Motor neuron (in vitro differentiated cells): ENCODE measurements at regions of chr2 and their contacts with region 1.

Region 1: DNA sequence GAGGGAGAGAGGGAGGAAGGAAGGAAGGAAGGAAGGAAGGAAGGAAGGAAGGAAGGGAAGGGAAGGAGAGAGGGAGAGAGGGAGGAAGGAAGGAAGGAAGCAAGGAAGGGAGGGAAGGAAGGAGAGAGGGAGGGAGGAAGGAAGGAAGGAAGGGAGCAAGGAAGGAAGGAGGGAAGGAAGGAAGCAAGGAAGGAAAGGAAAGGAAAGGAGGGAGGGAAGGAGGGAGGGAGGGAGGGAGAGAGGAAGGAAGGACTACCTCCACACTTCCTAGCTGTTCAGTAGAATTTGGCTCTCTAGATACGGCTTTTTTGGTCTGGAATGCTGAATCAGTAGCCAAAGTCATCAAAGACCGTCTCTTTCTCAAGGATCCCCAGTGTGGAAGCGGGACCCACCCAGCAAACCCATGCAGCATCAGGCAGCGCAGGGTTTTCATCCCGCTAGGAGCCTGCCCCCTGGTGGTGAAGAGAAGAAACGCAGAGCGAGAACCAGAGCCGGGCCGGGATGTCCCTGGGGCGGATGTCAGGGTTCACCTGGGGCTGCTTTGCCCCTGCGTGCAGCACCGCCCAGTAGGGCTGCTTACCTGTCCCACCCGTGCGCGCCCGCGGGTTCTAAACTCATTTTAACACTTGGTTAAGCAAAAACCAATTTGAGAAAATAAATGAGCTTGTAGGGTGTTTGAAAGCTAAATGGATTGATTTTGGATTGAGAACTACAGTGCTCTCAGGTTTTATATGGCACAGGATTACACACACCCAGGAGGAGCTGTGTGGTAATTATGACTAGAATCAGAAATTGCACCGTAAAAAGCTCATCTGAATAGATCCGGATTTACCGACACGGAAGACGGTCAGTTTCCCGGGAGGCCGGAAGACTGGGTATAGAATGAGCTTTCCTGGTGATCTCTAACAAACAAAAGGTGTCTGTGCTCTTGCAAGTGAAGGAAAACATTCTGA is 48.1 kb upstream of the ARL4C start:
- ATAC-seq: peak in 6 of 8 experiments; percentile 4 to 90 (median 61)
- H3K4me3 ChIP-seq: no peak overlapping the region
- H3K27ac ChIP-seq: no peak overlapping the region
- H3K4me1 ChIP-seq: peaks cover 17 to 33% of the 10 kb centered on the region in 2 donors

Region 2: DNA sequence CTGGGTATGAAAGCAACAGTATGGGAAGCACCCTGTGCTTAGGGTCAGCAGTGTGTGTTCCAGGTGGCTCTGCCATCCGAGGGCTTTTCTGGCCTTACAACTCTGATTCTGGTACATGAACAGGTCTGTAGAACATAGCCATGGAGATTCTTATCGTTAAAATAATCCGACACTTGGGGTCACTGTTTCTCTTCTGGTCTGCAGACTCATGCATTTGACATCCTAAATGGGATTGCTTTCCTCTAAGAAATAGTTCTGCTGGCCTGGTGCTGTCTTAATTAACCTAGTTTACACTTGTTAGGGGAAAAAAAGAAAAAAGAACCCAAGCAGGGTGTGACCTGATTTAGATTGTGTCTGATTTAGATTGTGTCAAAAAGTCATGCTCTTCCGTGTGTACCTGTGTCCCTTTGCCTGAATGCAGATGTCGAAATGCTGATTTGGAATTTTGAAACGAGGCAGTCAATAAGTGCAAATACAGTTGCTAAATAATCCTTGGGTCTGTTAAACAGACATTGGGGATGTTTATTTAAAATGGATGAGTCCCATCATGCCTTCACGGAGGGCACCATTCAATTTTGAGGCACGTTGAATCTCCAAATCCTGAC is 568.1 kb before region 1 on chr2:
- in situ Hi-C with region 1: loop called in 7 of 9 experiments (anchors 25 kb)
- ATAC-seq: peak; percentile 6 to 75 (median 66)
- H3K4me3 ChIP-seq: no peak overlapping the region
- H3K27ac ChIP-seq: no peak overlapping the region
- H3K4me1 ChIP-seq: peaks cover 12 to 15% of the 10 kb centered on the region in 2 donors

Region 3: GRCh38 chr2:234135720-234136221 is 409.2 kb before region 1 on chr2:
- in situ Hi-C with region 1: loop called in 5 of 9 experiments (anchors 10 to 25 kb)
- ATAC-seq: peak; percentile 91 to 98 (median 94)
- H3K4me3 ChIP-seq: no peak overlapping the region
- H3K27ac ChIP-seq: no peak overlapping the region
- H3K4me1 ChIP-seq: peaks cover 10 to 11% of the 10 kb centered on the region in 2 donors

Region 4: DNA sequence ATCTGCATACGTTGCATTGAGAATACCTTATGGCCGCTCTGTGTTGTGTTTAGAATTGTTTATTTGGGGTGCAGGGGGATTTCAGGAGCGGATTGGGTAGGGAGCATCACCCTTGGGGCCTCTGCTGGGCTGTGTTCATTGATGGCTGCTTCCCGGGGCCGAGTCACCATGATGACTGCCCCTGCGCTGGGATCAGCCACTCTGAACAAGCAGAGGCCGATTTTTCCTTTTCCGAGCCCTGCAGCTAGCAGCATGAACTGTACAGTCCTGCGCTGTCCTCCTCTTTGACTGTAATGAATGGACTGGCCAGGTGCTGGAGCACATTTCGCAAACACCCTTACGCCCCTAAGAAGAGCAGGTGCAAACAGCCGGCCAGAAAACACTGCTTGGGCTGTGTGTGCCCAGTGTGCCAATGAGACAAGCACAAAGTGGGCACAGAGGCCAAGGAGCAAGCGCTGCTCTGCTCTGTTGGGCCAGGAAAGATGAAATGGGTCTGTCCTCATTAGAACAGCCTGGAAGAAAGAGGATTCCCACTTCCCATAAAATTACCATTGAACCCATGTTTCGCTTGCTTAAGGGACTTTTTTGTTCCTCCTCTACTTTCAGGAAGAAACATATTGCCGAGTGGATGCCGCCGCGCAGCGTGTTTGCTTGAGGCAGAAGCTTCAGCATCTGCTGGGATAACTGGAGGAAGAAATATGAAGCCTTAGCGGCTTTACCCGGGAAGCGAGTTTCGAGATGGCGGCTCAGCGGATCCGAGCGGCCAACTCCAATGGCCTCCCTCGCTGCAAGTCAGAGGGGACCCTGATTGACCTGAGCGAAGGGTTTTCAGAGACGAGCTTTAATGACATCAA is 489.6 kb after region 1 on chr2:
- in situ Hi-C with region 1: no loop called
- ATAC-seq: peak in 5 of 8 experiments; percentile 16 to 69 (median 31)
- H3K4me3 ChIP-seq: no peak overlapping the region
- H3K27ac ChIP-seq: peak overlapping the region in 1 of 2 donors; percentile 17
- H3K4me1 ChIP-seq: peaks cover 38 to 63% of the 10 kb centered on the region in 2 donors